ENCODE measurements at regions of chr11 and their contacts with region 1.

Region 1: DNA sequence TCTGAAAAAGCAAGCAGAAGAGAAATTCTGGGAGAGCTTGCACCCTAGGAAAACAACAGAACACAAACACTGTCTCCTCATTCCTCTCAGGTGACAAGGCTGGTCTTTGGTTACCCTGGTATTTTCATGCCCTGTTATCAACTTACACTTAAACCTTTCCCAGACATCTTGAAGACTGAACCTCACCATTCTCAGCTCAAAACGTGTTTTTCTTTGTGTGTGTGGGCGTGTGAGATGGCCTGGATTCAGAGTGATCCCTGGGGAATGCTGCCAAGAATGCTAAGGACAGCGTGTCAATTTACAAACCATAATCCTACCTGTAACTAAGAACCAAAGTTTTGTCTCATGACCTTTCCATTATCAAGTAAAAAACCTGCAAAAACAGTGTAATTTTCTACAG is 33.3 kb downstream of the ELF5 start:
- DNase-seq: no peak
- ATAC-seq: no peak
- H3K4me3 Mint-ChIP-seq: no peak overlapping the region
- H3K27ac Mint-ChIP-seq: no peak overlapping the region
- H3K4me1 Mint-ChIP-seq: no peaks in the 10 kb centered on the region
- H3K27me3 Mint-ChIP-seq: peaks cover 2% of the 10 kb centered on the region
- CTCF ChIP-seq: no peak

Region 2: DNA sequence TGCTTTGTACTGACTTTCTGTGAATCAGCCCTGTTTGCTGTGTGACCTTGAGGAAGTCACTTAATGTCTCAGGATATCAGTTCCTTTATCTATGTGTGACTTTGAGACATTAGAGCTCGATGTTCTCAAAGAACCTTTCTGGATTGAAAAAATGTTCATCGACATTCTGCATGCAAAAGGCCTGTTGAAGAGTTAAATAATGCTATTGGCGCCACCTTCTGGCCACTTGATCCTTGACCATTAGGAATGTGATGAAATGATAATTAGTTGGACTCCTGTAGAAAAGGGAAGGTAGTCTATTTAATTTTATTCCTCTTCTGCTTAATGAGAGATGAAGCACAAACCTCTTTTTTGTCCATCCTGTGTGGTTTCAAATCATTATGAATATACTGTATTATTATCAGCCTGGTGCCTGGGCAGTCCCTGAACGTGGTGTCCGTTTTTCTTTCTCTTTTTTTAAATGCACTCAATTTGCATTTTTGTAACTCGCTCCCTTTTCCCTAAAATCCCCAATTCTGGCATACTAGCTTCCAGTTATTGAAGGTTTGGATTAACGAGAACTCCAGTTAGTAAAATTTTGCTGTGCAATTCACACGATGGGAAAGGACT is 12.6 kb after region 1 on chr11:
- CTCF ChIA-PET with region 1: interaction called, 11 read pairs
- POLR2A ChIA-PET with region 1: no interaction called
- intact Hi-C with region 1: no loop called
- DNase-seq: peak; percentile 78
- ATAC-seq: no peak
- H3K4me3 Mint-ChIP-seq: no peak overlapping the region
- H3K27ac Mint-ChIP-seq: no peak overlapping the region
- H3K4me1 Mint-ChIP-seq: no peaks in the 10 kb centered on the region
- H3K27me3 Mint-ChIP-seq: peaks cover 1% of the 10 kb centered on the region
- CTCF ChIP-seq: peak; percentile 83

Region 3: DNA sequence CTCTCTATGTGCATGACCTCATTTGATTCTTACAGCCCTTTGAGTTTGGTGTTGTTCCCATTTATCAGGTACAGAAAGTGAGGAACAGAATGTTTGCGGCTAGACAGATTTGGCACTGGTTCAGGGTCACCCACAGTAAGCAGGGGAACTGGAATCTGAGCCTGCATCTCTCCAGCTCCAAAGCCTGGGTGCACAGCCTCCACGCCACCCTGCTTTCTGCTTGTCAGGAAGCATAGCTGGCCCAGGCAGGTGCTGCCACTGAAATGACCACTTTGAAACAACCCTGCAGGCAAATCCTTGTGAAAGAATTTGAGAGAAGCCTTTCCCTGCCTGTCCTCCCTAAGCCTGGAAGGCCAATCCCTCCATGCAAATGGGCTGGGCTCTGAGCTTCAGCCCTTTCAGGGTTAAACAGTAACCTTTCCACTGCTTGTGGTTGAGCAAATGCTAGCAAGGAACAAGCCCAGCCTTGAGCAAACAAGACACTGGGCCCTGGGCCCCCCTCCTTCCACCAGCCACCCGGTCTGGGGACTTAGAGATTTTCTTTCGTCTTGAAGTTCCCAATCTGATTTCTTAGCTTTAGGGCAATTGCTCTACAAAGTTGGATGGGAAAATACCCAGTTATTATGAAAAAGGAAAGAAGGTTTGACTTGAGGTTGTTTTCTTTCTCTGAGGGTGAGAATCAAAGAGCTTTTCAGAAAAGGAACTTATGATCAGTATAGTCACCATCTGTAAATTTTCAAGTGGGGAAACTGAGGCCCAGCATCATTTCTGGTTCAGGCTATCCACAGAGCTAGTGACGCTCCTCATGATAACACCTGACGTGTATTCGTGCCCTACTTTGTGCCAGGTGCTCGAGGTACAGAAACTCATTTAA is 160.0 kb after region 1 on chr11:
- CTCF ChIA-PET with region 1: no interaction called
- POLR2A ChIA-PET with region 1: no interaction called
- intact Hi-C with region 1: no loop called
- DNase-seq: no peak
- ATAC-seq: no peak
- H3K4me3 Mint-ChIP-seq: no peak overlapping the region
- H3K27ac Mint-ChIP-seq: no peak overlapping the region
- H3K4me1 Mint-ChIP-seq: no peaks in the 10 kb centered on the region
- H3K27me3 Mint-ChIP-seq: peaks cover 24% of the 10 kb centered on the region
- CTCF ChIP-seq: no peak

Region 4: DNA sequence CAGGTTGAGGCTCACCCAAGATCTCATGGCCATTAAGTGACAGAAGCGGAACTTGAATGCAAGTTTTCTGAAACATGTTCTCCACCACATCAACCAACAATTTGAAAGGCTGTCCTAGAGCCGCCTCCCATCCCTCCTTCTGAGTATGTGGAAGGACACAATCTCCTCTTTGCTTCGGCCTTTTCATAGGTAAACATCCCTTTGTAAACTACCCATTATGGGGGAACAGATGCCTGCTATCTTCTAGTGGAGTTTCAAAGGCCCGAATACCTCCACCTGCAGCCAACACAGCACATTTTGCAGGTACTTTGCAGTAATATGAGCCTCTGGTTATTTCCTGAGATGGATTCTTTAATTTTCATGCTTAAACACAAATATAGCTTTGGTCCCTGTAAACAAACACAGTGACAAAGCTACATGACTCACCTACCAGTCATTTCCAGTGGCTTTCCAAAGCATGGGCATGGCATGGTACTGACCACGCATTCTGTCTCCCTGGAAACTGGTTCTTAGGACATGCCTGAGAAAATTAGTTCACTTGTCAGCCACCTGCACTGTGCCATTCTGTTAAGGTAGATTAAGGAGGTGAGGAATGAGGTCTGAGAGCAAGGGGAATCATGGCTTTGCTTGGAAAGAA is 200.7 kb after region 1 on chr11:
- CTCF ChIA-PET with region 1: no interaction called
- POLR2A ChIA-PET with region 1: no interaction called
- intact Hi-C with region 1: no loop called
- DNase-seq: no peak
- ATAC-seq: no peak
- H3K4me3 Mint-ChIP-seq: no peak overlapping the region
- H3K27ac Mint-ChIP-seq: no peak overlapping the region
- H3K4me1 Mint-ChIP-seq: no peaks in the 10 kb centered on the region
- H3K27me3 Mint-ChIP-seq: peaks cover 12% of the 10 kb centered on the region
- CTCF ChIP-seq: no peak